ENCODE measurements at regions of chr16 and their contacts with region 1.

Region 1: GRCh38 chr16:17364319-17365210 is 106.2 kb downstream of the XYLT1 start:
- DNase-seq: no peak
- ATAC-seq: no peak
- H3K4me3 ChIP-seq: no peak overlapping the region
- H3K27ac ChIP-seq: no peak overlapping the region
- H3K4me1 ChIP-seq: peaks cover 39% of the 10 kb centered on the region
- H3K27me3 ChIP-seq: no peaks in the 10 kb centered on the region
- CTCF ChIP-seq: no peak
- EP300 ChIP-seq: no peak
- POLR2A ChIP-seq: no peak
- RAD21 ChIP-seq: no peak

Region 2: DNA sequence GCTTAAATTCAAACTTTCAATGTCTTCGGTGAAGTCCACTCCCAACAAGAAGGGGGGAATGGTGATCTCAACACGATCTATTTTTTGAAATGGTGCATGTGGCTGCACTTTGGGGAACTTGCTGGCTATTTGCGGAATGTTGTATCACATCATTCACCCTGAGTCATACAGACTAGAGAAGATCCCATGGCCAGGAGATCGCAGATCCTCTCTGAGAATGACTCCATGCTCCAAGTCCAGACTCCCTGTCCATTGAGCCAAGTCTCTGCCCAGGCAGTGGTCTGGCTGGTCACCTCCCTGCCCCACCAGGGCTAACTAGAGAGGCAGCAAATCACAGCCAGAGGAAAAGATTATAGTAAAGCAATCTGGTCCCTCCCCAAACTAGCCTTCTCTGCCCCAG is 14.4 kb before region 1 on chr16:
- CTCF ChIA-PET with region 1: interaction called, 47 read pairs
- POLR2A ChIA-PET with region 1: interaction called, 46 read pairs
- RAD21 ChIA-PET with region 1: interaction called, 162 read pairs
- SMC1A ChIA-PET with region 1: interaction called, 303 read pairs
- in situ Hi-C with region 1: no loop called
- intact Hi-C with region 1: no loop called
- DNase-seq: no peak
- ATAC-seq: no peak
- H3K4me3 ChIP-seq: no peak overlapping the region
- H3K27ac ChIP-seq: no peak overlapping the region
- H3K4me1 ChIP-seq: peaks cover 29% of the 10 kb centered on the region
- H3K27me3 ChIP-seq: no peaks in the 10 kb centered on the region
- CTCF ChIP-seq: no peak
- EP300 ChIP-seq: no peak
- POLR2A ChIP-seq: no peak
- RAD21 ChIP-seq: no peak

Measured in GM12878 (cell line).